ENCODE measurements at regions of chr3 and their contacts with region 1.

Region 1: GRCh38 chr3:68363821-68364220 is 568.5 kb downstream of the TAFA4 start:
- DNase-seq: no peak
- H3K4me3 ChIP-seq: no peak overlapping the region
- H3K27ac ChIP-seq: no peak overlapping the region
- H3K4me1 ChIP-seq: no peaks in the 10 kb centered on the region
- H3K27me3 ChIP-seq: no peaks in the 10 kb centered on the region
- CTCF ChIP-seq: no peak
- EP300 ChIP-seq: no peak
- POLR2A ChIP-seq: no peak

Region 2: GRCh38 chr3:68135067-68135466 is 228.8 kb before region 1 on chr3:
- intact Hi-C with region 1: no loop called
- DNase-seq: no peak
- H3K4me3 ChIP-seq: no peak overlapping the region
- H3K27ac ChIP-seq: no peak overlapping the region
- H3K4me1 ChIP-seq: no peaks in the 10 kb centered on the region
- H3K27me3 ChIP-seq: no peaks in the 10 kb centered on the region
- CTCF ChIP-seq: no peak
- EP300 ChIP-seq: no peak
- POLR2A ChIP-seq: no peak

Region 3: DNA sequence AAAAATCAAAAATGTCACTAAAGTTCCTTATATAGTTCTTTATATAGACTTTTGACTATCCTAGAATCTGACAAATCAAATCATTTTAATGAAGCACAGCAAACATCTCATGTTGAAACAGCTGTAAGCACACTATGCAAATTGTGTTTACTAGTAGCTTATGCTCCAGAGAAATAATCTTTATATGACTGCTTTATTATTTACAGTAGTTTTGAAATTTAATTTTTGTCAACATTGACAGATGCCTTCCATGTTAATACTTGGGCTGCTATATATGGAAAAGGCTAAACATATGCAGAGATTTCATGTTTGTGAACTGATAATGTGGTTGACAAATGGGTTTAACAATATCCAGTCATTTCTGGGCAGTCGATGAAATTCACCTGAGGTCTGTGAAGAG is 48.3 kb before region 1 on chr3:
- intact Hi-C with region 1: loop called in 1 of 4 experiments (anchors 1 kb)
- DNase-seq: no peak
- H3K4me3 ChIP-seq: no peak overlapping the region
- H3K27ac ChIP-seq: no peak overlapping the region
- H3K4me1 ChIP-seq: no peaks in the 10 kb centered on the region
- H3K27me3 ChIP-seq: no peaks in the 10 kb centered on the region
- CTCF ChIP-seq: no peak
- EP300 ChIP-seq: no peak
- POLR2A ChIP-seq: no peak